Activated CD4-positive, alpha-beta memory T cell treated with anti-CD3 and anti-CD28 coated beads for 36 hours (primary cell): ENCODE measurements at regions of chr10 and their contacts with region 1.

Region 1: DNA sequence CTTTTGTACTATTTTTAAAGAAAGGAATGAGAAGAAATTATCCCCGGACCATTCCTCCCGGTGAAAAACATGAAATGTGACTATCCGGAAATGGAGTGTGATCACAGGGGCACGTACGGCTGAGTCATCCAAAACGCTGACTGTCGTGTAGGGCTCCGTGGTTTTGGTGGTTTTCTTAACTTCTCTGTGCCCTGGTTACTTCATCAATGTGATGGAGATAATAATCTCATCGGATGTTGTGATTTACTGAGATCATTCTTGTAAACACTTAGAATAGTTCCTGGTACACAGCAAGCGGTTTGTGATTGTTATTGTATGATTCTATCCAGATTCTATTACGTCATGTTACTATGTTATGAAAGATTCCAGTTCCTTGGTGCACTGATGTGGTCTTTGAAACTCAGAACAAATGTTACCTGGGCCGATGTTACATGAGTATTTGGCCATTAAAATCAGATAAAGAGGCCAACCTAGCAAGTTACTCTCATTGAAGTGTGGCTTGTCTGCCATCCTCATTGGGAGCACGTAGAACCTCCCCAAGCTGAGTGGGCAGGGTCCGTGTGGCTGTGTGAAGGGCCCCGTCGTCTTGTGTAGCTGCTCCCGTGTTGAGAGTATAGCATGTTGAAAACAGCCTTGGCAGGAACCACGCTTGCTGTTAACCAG is 99.5 kb downstream of the CAMK1D start:
- DNase-seq: peak; percentile 88
- H3K4me3 Mint-ChIP-seq: peak overlapping the region; percentile 50
- H3K27ac Mint-ChIP-seq: peak overlapping the region; percentile 89
- H3K4me1 Mint-ChIP-seq: peaks cover 43% of the 10 kb centered on the region
- H3K27me3 Mint-ChIP-seq: no peaks in the 10 kb centered on the region

Region 2: DNA sequence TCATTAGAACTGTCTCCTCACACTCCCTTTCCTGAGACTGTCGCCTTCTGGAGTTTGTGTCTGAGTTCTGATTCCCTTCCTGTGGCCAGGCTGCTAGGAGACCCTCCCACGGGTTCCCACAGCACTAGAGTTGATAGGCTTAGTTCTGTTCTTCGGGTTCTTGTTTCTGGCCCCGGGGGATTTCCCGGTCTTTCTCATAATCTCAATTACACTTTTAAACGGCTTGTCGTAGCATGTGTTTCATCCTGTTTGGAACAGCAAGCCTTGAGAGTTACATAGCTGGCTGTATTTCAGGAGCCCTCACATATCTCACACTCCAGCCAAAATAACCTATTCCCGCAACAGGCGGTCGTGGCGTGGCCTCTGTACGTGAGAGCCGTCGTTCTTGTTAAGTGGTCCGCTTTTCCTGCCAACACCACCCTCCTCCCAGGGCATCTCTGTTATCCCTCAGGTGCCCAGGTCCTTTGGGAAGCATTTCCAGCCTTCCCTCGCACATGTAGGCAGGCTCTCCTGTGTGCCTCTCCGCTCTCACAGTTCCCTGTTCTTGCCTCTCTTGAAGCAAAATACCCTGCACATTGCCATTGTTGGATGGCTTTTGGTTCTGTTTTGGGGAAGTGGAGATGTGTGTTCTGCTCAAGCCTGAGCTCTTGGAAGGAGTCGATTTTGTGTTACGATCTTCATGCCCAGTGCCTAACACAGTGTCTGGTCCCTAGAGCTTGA is 206.9 kb before region 1 on chr10:
- CTCF ChIA-PET with region 1: no interaction called
- POLR2A ChIA-PET with region 1: no interaction called
- intact Hi-C with region 1: no loop called
- DNase-seq: peak; percentile 88
- H3K4me3 Mint-ChIP-seq: peak overlapping the region; percentile 44
- H3K27ac Mint-ChIP-seq: peak overlapping the region; percentile 82
- H3K4me1 Mint-ChIP-seq: peaks cover 37% of the 10 kb centered on the region
- H3K27me3 Mint-ChIP-seq: no peaks in the 10 kb centered on the region

Region 3: DNA sequence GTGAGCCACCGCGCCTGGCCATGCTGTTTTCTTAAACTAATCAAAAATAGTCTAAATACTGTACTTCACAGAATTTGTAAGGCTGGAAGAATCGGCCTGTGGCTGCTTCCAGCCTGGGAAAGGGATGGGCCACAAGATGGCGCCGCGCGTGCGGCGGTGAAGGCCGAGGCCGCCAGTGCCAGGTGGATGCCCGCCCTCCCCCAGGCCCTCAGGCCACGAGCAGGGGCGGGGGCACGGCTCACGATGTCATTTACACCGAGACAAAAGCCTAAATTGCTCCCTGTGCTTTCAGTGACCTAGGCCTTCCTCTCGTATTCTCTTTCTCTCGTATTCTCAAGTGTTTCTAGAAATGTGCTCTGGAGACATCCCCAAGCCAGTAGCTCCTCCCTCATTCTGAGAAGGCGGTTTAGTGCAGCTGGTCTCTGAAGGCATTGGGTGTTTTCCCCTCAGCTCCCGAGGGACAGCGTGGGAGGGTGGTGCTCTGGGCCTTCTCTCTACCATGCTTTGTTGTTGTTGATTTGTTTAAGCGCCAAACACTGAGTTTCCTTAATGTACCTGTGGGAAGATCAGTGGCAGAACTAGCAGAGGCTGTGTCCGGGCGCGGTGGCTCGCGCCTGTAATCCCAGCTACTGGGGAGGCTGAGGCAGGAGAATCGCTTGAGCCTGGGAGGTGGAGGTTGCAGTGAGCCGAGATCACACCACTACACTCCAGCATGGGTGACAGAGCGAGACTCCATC is 184.5 kb before region 1 on chr10:
- CTCF ChIA-PET with region 1: interaction called, 8 read pairs
- POLR2A ChIA-PET with region 1: no interaction called
- intact Hi-C with region 1: loop called (anchors 1 kb)
- DNase-seq: peak; percentile 87
- H3K4me3 Mint-ChIP-seq: peak overlapping the region; percentile 47
- H3K27ac Mint-ChIP-seq: peak overlapping the region; percentile 82
- H3K4me1 Mint-ChIP-seq: peaks cover 19% of the 10 kb centered on the region
- H3K27me3 Mint-ChIP-seq: no peaks in the 10 kb centered on the region

Region 4: DNA sequence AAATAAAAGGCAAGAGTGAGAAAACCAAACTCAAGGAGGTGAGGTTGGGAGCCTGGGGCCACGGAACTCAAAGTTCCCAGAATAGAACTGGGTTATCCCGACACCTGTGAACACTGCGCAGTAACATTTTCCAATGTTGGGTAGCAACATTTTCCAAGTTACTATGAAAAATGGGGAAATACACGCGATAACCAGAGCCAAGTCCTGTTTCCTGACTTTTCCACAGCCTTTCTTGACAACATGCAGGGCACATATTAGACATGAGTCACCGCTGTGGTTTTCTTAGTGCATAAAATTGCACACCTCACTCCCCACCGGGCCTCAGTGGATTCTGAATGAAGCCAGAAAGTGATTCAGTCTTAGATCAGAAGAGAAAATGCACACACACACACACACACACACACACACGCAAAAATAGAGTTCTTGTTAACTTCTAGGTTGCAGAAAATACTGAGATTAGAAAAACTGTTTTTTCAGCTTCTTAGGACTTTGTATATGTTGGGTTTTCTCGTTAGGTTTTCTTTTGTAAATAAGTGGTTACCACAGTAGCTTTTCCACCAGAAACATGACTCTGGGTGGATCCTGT is 29.5 kb before region 1 on chr10:
- CTCF ChIA-PET with region 1: no interaction called
- POLR2A ChIA-PET with region 1: interaction called, 9 read pairs
- intact Hi-C with region 1: loop called (anchors 1 kb)
- DNase-seq: peak; percentile 89
- H3K4me3 Mint-ChIP-seq: peak overlapping the region; percentile 20
- H3K27ac Mint-ChIP-seq: peak overlapping the region; percentile 67
- H3K4me1 Mint-ChIP-seq: peaks cover 34% of the 10 kb centered on the region
- H3K27me3 Mint-ChIP-seq: no peaks in the 10 kb centered on the region

Region 5: GRCh38 chr10:12638103-12638502 is 189.2 kb after region 1 on chr10:
- CTCF ChIA-PET with region 1: no interaction called
- POLR2A ChIA-PET with region 1: interaction called, 3 read pairs
- intact Hi-C with region 1: loop called (anchors 2 kb)
- DNase-seq: peak; percentile 60
- H3K4me3 Mint-ChIP-seq: no peak overlapping the region
- H3K27ac Mint-ChIP-seq: no peak overlapping the region
- H3K4me1 Mint-ChIP-seq: peaks cover 40% of the 10 kb centered on the region
- H3K27me3 Mint-ChIP-seq: no peaks in the 10 kb centered on the region